MCF 10A (cell line): ENCODE measurements at regions of chr3 and their contacts with region 1.

Region 1: GRCh38 chr3:123605789-123606234 is 21.0 kb upstream of the HACD2 start:
- DNase-seq: peak; percentile 82
- H3K4me3 Mint-ChIP-seq: peak overlapping the region; percentile 47
- H3K27ac Mint-ChIP-seq: peak overlapping the region; percentile 96
- H3K4me1 Mint-ChIP-seq: peaks cover 31% of the 10 kb centered on the region
- H3K27me3 Mint-ChIP-seq: no peaks in the 10 kb centered on the region
- CTCF ChIP-seq: no peak

Region 2: DNA sequence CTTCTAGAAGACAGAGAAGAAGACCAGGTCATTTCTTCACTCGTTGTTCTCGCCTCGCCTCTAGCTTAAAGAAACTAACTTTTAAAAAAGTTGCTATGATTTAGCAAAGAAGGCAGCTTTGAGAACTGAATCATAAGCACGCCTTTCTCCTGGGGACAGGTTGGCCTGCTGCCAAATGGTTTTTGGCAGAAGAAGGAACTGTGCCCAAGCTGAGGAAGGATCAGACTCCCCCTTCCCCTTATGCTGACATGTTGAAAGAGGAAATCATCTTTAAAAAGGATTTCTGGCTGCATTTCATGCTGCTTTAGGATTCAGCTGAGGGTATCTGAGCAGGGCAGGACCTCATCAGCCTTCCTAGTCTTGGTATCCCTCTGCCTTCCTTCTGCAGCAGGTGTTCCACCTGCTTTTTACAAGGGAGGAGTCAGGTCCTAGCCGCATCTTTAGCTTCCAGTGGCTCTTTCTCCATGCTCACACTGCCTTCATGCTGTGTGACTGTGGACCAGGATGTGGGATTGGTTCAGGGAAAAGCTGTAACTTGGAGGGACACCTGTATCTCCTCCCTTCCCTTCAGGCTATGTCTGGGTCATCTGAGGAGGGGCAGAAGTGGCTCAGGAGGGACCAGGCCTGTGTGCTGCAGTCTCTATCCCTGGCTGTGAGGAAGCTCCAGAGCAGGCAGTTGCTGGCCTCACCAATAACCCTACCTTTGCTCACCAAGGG is 13.1 kb after region 1 on chr3:
- CTCF ChIA-PET with region 1: interaction called, 6 read pairs
- POLR2A ChIA-PET with region 1: interaction called, 114 read pairs
- intact Hi-C with region 1: no loop called
- DNase-seq: peak; percentile 88
- H3K4me3 Mint-ChIP-seq: peak overlapping the region; percentile 60
- H3K27ac Mint-ChIP-seq: peak overlapping the region; percentile 40
- H3K4me1 Mint-ChIP-seq: peaks cover 31% of the 10 kb centered on the region
- H3K27me3 Mint-ChIP-seq: no peaks in the 10 kb centered on the region
- CTCF ChIP-seq: no peak

Region 3: GRCh38 chr3:123688241-123688747 is 82.5 kb after region 1 on chr3:
- CTCF ChIA-PET with region 1: no interaction called
- POLR2A ChIA-PET with region 1: no interaction called
- intact Hi-C with region 1: no loop called
- DNase-seq: peak; percentile 76
- H3K4me3 Mint-ChIP-seq: no peak overlapping the region
- H3K27ac Mint-ChIP-seq: no peak overlapping the region
- H3K4me1 Mint-ChIP-seq: peaks cover 17% of the 10 kb centered on the region
- H3K27me3 Mint-ChIP-seq: no peaks in the 10 kb centered on the region
- CTCF ChIP-seq: no peak